PC-3 (cell line): ENCODE measurements at regions of chr5 and their contacts with region 1.

Region 1: DNA sequence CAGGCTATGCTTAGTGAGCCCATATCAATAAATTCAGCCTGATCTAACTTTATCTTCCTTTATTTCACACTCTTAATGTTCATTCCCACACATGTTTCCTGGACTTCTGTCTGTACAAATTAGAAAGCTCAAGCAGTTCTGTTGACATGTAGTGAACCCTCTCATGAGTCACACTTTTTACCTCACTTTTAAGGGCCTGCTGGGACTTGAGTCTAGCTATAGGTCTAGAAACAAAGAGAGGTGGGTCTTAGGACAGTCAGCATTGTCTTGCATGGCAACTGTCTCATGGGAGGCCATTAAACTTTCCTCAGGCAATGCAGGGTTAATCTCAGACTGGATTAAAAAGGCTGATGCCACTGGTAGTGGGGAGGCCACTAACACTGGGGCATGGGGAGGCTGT is 8.6 kb upstream of the CCNH start:
- DNase-seq: no peak
- ATAC-seq: no peak
- H3K4me3 ChIP-seq: no peak overlapping the region
- H3K27ac ChIP-seq: no peak overlapping the region
- H3K4me1 ChIP-seq: peaks cover 16% of the 10 kb centered on the region
- H3K27me3 ChIP-seq: no peaks in the 10 kb centered on the region
- CTCF ChIP-seq: no peak

Region 2: DNA sequence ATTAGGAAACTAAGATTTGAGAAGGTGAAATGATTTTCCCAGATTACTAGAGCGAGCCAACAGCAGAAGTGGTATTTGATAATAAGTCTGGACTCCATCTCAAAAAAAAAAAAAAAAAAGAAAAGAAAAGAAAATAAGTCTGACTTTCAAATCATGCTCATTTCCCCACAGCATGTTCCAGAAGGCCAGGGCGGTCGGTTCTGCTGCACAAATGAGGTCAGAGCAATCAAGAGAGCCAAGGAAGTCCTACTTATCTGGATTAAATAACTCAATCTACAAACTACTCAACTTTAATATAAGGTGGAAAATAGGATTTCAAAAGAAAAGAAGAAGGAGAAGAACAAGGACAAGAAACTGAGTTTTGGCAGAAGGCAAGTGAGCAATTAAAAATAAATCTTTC is 284.0 kb before region 1 on chr5:
- CTCF ChIA-PET with region 1: no interaction called
- POLR2A ChIA-PET with region 1: no interaction called
- intact Hi-C with region 1: no loop called
- DNase-seq: no peak
- ATAC-seq: no peak
- H3K4me3 ChIP-seq: no peak overlapping the region
- H3K27ac ChIP-seq: no peak overlapping the region
- H3K4me1 ChIP-seq: no peaks in the 10 kb centered on the region
- H3K27me3 ChIP-seq: no peaks in the 10 kb centered on the region
- CTCF ChIP-seq: no peak

Region 3: DNA sequence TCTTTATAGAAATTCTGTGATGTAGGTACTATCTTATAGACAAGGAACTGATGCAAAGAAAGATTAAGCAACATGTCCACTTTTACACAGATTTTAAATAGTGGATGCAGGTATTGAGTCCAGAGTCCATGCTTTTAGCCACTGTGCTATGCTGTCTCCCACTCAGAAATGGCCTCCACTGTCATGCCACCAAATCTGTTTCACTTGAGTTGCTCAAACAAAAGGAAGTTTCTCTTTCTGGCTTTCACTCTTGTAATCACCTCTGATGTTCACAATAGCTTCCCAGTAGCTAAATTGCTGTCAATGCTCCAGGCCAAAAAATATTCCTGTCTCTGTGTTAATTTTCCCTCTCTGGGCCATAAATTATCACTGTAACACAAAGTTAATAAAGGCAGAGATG is 230.6 kb before region 1 on chr5:
- CTCF ChIA-PET with region 1: no interaction called
- POLR2A ChIA-PET with region 1: no interaction called
- intact Hi-C with region 1: no loop called
- DNase-seq: no peak
- ATAC-seq: no peak
- H3K4me3 ChIP-seq: no peak overlapping the region
- H3K27ac ChIP-seq: no peak overlapping the region; the same call in 1 of the 2 replicates
- H3K4me1 ChIP-seq: peaks cover 40% of the 10 kb centered on the region
- H3K27me3 ChIP-seq: no peaks in the 10 kb centered on the region
- CTCF ChIP-seq: no peak

Region 4: DNA sequence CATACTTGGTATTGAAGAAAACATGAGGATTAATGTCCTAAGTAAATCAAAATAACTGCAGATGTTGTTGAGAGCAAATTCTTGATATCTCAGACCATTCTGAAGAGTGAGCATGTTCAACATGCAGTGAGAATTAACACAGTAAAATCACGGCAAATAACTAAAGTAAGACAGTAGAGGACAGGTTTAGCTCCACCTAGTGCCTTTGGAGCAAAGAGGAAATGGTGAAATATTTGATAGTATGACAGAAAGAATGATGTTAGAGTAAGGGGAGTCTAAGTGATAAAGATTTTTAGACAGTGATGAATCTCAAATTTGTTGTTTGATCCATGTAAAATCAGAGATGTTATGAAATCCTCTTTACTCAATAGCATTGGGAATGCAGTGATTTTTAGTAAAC is 423.1 kb after region 1 on chr5:
- CTCF ChIA-PET with region 1: no interaction called
- POLR2A ChIA-PET with region 1: no interaction called
- intact Hi-C with region 1: loop called (anchors 10 kb)
- DNase-seq: peak; percentile 31
- ATAC-seq: peak; percentile 59
- H3K4me3 ChIP-seq: no peak overlapping the region
- H3K27ac ChIP-seq: no peak overlapping the region
- H3K4me1 ChIP-seq: peaks cover 11% of the 10 kb centered on the region; the same call in 1 of the 2 replicates
- H3K27me3 ChIP-seq: no peaks in the 10 kb centered on the region
- CTCF ChIP-seq: peak; percentile 68